ENCODE measurements at regions of chr1 and their contacts with region 1.

Region 1: GRCh38 chr1:226827968-226828513 is 42.4 kb upstream of the PSEN2 start:
- DNase-seq: peak; percentile 96 to 98
- ATAC-seq: peak; percentile 98 to 99 (median 99)
- H3K4me3 ChIP-seq: peak overlapping the region; percentile 48
- H3K27ac ChIP-seq: peak overlapping the region; percentile 74
- H3K4me1 ChIP-seq: peaks cover 10% of the 10 kb centered on the region
- H3K27me3 ChIP-seq: no peaks in the 10 kb centered on the region
- CTCF ChIP-seq: peak; percentile 98

Region 2: DNA sequence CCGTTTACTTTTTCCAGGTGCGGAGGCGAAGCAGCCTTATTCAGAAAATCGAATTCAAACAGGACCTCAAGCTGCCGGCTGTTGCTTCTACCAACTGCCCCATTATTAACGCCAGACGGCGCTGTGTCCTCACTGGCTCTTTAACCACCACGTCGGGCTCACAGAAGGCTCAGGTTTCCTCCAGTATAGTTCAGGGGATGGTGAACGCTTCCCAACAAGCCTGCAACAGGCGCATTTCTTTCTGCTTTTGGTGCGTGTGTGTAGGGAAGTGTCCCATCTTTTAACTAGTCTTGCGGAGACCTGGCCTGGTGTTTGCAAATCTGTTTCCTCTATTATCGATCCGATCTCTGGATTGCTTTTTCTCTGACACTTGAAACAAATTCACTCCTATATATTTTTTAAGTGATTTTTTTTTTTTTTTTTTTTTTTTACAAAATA is 280.3 kb before region 1 on chr1:
- intact Hi-C with region 1: loop called in 1 of 2 experiments (anchors 5 kb)
- DNase-seq: peak; percentile 76 to 87
- ATAC-seq: peak; percentile 75 to 90 (median 84)
- H3K4me3 ChIP-seq: peak overlapping the region; percentile 67
- H3K27ac ChIP-seq: no peak overlapping the region
- H3K4me1 ChIP-seq: peaks cover 16% of the 10 kb centered on the region
- H3K27me3 ChIP-seq: peaks cover 0 to 37% (median 5%) of the 10 kb centered on the region in 3 donors
- CTCF ChIP-seq: peak; percentile 85

Region 3: GRCh38 chr1:226736908-226737818 is 90.9 kb before region 1 on chr1:
- intact Hi-C with region 1: loop called (anchors 2 to 5 kb)
- DNase-seq: peak; percentile 49 to 79
- ATAC-seq: peak; percentile 57 to 73 (median 64)
- H3K4me3 ChIP-seq: peak overlapping the region; percentile 94
- H3K27ac ChIP-seq: peak overlapping the region; percentile 87
- H3K4me1 ChIP-seq: peaks cover 23% of the 10 kb centered on the region
- H3K27me3 ChIP-seq: no peaks in the 10 kb centered on the region
- CTCF ChIP-seq: peak; percentile 16

Measured in psoas muscle (tissue), 8 donors.